ENCODE measurements at regions of chr20 and their contacts with region 1.

Region 1: DNA sequence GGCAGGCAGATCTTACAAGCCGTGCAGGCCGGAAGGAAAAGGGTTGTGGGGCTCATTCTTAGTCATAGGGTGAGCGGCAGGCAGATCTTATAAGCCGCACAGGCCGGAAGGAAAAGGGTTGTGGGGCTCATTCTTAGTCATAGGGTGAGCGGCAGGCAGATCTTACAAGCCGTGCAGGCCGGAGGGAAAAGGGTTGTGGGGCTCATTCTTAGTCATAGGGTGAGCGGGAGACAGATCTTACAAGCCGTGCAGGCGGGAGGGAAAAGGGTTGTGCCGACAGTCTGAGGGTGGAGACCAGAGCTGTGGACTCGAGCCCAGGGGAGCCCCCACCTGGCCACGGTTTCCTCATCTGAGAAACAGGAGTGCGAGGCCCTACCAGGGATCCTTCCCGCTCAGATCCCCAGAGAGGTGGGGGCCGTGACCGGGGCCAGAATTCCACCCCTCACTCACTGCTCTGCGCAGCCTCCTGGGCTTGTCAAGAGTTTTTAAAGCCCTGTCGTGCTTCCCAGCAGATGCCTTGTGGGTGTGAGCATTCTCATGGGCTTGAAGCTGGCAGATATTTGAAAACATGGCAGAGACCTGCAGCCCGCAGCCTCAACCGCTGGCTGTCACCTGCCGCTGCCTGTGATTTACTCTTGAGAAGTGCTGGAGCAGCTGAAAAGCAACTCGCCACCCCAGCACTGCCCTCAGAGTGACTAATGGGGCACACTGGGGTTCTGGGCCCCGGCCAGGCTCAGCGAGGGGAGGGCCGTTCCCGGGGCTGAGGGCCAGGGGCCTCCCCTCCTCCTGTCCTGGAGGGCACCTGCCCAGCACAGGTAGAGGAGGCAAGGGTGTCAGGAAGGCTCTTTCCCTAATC is 31.9 kb downstream of the NTSR1 start:
- DNase-seq: peak; percentile 96
- H3K4me3 Mint-ChIP-seq: peak overlapping the region; percentile 75
- H3K27ac Mint-ChIP-seq: peak overlapping the region; percentile 80
- H3K4me1 Mint-ChIP-seq: peaks cover 32% of the 10 kb centered on the region
- H3K27me3 Mint-ChIP-seq: peaks cover 11% of the 10 kb centered on the region

Region 2: GRCh38 chr20:62652051-62652926 is 88.2 kb before region 1 on chr20:
- intact Hi-C with region 1: loop called (anchors 5 kb)
- DNase-seq: peak; percentile 89
- H3K4me3 Mint-ChIP-seq: peak overlapping the region; percentile 82
- H3K27ac Mint-ChIP-seq: peak overlapping the region; percentile 92
- H3K4me1 Mint-ChIP-seq: peaks cover 44% of the 10 kb centered on the region
- H3K27me3 Mint-ChIP-seq: no peaks in the 10 kb centered on the region

Region 3: GRCh38 chr20:62721511-62722197 is 18.9 kb before region 1 on chr20:
- intact Hi-C with region 1: loop called (anchors 1 kb)
- DNase-seq: no peak
- H3K4me3 Mint-ChIP-seq: no peak overlapping the region
- H3K27ac Mint-ChIP-seq: no peak overlapping the region
- H3K4me1 Mint-ChIP-seq: peaks cover 10% of the 10 kb centered on the region
- H3K27me3 Mint-ChIP-seq: peaks cover 49% of the 10 kb centered on the region

Region 4: DNA sequence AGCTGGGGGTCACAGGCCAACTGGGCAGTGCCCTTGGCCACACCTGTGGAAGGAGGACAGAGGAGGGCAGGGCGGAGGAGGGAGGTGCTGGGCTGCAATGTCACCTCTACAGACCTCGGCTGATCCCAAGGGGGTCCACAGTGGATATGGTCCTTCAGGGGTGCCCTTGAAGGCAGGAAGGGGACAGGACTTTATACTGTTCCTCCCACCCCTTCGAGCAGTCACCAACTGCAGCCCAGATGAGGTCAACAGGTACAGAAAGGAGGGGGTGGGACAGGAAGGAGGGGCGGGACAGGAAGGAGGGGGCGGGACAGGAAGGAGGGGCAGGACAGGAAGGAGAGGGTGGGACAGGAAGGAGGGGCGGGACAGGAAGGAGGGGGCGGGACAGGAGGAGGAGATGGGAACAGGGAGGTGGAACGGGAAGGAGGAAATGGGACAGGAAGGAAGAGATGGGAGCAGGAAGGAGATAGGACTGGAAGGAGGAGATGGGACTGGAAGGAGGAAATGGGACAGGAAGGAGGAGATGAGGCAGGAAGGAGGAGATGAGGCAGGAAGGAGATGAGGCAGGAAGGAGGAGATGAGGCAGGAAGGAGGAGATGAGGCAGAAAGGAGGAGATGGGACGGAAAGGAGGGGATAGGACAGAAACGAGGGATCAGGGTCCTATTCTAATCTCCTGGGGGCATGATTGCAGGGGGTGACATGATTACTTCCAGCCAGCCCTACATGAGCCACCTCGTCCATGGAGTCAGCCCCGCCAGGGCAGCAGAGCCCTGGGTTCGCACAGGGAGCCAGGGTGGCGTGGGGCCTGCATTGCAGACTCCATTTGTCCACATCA is 36.4 kb after region 1 on chr20:
- intact Hi-C with region 1: loop called (anchors 1 kb)
- DNase-seq: peak; percentile 86
- H3K4me3 Mint-ChIP-seq: peak overlapping the region; percentile 54
- H3K27ac Mint-ChIP-seq: peak overlapping the region; percentile 73
- H3K4me1 Mint-ChIP-seq: peaks cover 28% of the 10 kb centered on the region
- H3K27me3 Mint-ChIP-seq: no peaks in the 10 kb centered on the region

Region 5: GRCh38 chr20:62808211-62808865 is 67.8 kb after region 1 on chr20:
- intact Hi-C with region 1: no loop called
- DNase-seq: peak; percentile 93
- H3K4me3 Mint-ChIP-seq: peak overlapping the region; percentile 45
- H3K27ac Mint-ChIP-seq: peak overlapping the region; percentile 72
- H3K4me1 Mint-ChIP-seq: peaks cover 20% of the 10 kb centered on the region
- H3K27me3 Mint-ChIP-seq: no peaks in the 10 kb centered on the region

Region 6: GRCh38 chr20:62837800-62838454 is 97.4 kb after region 1 on chr20:
- intact Hi-C with region 1: no loop called
- DNase-seq: no peak
- H3K4me3 Mint-ChIP-seq: no peak overlapping the region
- H3K27ac Mint-ChIP-seq: no peak overlapping the region
- H3K4me1 Mint-ChIP-seq: peaks cover under 1% of the 10 kb centered on the region
- H3K27me3 Mint-ChIP-seq: no peaks in the 10 kb centered on the region

Measured in activated CD4-positive, alpha-beta T cell treated with anti-CD3 and anti-CD28 coated beads, Interleukin-2, amount 10 ng/mL, durations not matched to agents 24 days and 14 days (primary cell).